Activated CD4-positive, alpha-beta T cell treated with anti-CD3 and anti-CD28 coated beads for 36 hours (primary cell): ENCODE measurements at regions of chr3 and their contacts with region 1.

Region 1: GRCh38 chr3:146326670-146327543 is 76.0 kb upstream of the PLSCR4 start:
- DNase-seq: no peak
- ATAC-seq: no peak
- H3K4me3 Mint-ChIP-seq: no peak overlapping the region
- H3K27ac Mint-ChIP-seq: no peak overlapping the region
- H3K4me1 Mint-ChIP-seq: no peaks in the 10 kb centered on the region
- H3K27me3 Mint-ChIP-seq: peaks cover 4% of the 10 kb centered on the region

Region 2: DNA sequence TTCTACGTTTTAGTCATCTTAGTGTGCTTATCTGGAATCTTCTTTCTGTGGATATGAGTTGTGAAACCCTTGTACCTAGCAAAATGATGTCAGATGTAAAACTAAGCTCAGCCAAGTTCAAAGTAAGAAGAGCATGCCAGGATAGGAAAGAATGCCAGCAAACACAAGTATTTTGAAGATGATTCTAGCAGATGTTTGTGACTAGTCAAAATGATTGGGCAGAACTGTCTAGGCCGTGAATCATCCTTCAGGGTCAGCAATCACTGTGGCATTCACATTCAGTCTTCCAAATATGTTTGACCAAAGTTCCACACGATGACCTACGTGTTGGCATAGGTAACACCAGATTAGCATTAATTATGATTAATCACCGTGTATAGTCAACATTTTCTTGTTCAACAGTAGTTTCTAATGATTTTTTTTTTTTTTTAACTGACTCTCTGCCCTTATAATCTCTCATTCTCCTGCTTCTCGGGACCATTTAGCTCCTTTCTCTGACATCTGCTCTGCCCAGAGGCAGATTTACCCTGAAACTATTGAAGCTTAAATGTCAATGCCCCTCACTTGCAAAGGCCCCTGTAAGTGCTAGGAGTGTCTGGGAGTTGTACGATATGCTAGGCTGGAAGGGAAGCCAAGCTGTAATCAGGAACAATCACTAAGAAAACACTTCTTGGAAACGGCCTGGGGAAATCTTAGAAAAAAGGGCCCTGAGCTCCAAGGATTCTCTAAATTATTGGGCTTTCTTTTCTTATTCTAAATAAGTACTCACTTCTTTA is 160.3 kb before region 1 on chr3:
- CTCF ChIA-PET with region 1: no interaction called
- POLR2A ChIA-PET with region 1: no interaction called
- intact Hi-C with region 1: no loop called
- DNase-seq: no peak
- ATAC-seq: no peak
- H3K4me3 Mint-ChIP-seq: no peak overlapping the region
- H3K27ac Mint-ChIP-seq: no peak overlapping the region
- H3K4me1 Mint-ChIP-seq: peaks cover 5% of the 10 kb centered on the region
- H3K27me3 Mint-ChIP-seq: peaks cover 37% of the 10 kb centered on the region

Region 3: DNA sequence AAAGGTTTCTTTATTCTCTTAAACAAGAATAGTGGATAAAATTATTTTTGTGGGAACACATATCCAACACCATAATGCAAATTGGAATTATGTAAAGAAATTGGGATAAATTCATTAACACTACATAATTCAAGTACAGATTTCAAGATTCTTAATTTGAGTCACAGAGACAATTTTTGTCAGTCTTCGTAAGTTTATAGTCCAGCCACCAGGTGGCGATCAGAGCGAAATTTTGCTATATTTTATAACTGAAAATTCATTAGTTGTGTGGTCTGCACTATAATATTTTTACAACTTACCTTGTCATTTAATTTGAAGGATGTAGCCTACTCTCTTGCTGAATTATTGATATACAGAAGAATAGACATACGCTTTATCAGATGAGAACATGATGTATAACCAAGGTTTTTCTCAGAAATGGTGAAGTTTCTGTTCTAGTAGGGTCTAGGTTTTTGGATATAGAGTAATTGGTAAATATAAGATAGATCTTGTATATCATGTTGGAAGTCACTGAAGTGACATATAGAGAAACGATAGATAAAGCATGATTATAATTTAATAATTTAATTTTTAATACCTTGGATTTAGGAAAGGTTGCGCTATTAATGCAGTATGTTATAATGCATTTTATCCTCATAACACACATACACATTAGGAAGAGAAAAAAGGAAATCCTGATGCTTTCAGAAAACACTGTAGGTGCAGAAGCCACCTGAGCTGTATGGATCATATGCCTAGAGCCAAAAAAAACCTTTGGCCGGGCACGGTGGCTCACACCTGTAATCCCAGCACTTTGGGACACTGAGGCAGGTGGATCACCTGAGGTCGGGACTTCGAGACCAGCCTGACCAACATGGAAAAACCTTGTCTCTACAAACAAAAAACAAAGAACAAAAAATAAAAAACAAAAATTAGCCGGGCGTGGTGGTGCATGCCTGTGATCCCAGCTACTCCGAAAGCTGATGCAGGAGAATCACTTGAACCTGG is 107.7 kb before region 1 on chr3:
- CTCF ChIA-PET with region 1: interaction called, 3 read pairs
- POLR2A ChIA-PET with region 1: no interaction called
- intact Hi-C with region 1: loop called (anchors 1 to 5 kb)
- DNase-seq: peak; percentile 58
- ATAC-seq: no peak
- H3K4me3 Mint-ChIP-seq: no peak overlapping the region
- H3K27ac Mint-ChIP-seq: no peak overlapping the region
- H3K4me1 Mint-ChIP-seq: no peaks in the 10 kb centered on the region
- H3K27me3 Mint-ChIP-seq: peaks cover 8% of the 10 kb centered on the region

Region 4: GRCh38 chr3:146374146-146374545 is 47.2 kb after region 1 on chr3:
- CTCF ChIA-PET with region 1: no interaction called
- POLR2A ChIA-PET with region 1: no interaction called
- intact Hi-C with region 1: no loop called
- DNase-seq: no peak
- ATAC-seq: no peak
- H3K4me3 Mint-ChIP-seq: no peak overlapping the region
- H3K27ac Mint-ChIP-seq: no peak overlapping the region
- H3K4me1 Mint-ChIP-seq: no peaks in the 10 kb centered on the region
- H3K27me3 Mint-ChIP-seq: peaks cover 1% of the 10 kb centered on the region